ENCODE measurements at regions of chr3 and their contacts with region 1.

Region 1: DNA sequence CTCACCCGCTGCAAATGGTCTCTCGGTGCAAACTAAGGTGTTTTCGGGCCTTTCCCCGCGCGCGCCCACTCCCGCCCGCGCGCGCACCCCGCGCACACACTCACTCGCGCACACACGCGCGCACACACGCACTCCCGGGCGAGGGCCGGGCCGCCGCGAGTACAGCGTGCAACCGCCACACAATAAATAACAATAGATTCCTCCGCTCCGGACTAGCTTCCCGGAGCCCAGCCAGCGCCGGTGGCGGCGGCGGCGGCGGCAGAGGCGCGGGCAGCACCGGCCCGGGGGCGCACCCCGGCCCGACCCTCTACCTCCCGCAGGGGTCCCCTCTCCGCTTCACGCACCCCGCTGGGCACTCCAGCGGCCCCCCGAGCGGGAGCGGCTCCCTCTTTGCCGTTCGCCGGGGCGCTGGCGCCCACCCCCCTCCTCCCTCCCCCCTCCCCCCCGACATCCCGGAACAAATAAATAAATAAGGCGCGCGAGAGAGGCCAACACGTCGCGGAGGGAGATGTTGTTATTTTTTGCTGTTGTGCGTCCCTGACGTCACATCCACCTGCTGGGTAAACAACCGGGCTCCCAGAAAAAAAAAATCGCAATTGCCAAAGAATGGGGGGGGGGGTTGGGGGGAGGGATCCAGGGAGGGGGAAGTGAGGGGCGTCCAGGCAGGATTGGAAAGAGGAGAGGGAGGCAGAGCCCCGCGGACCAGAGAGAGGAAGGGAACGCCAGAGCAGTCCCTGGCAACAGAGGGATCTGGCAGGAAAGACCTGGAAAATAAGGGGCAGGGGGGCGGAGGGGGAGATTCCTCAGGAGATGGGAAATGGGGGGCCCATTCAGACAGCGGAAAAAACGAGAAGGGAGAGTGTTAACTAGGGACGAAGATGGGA is at the start of gene FOXP1:
- DNase-seq: peak; percentile 62 to 80 (median 72)
- ATAC-seq: peak; percentile 77
- H3K4me3 ChIP-seq: peak within 1 kb of the TSS; percentile 76
- H3K4me3 Mint-ChIP-seq: peak within 1 kb of the TSS; percentile 94 to 99 (median 98)
- H3K27ac ChIP-seq: peak within 1 kb of the TSS; percentile 85
- H3K27ac Mint-ChIP-seq: peak within 1 kb of the TSS; percentile 94 to 99 (median 98)
- H3K4me1 ChIP-seq: peaks cover 7 to 16% of the 10 kb centered on the region in 2 donors
- H3K4me1 Mint-ChIP-seq: peaks cover 12 to 44% (median 33%) of the 10 kb centered on the region in 7 donors
- H3K27me3 ChIP-seq: no peaks in the 10 kb centered on the region
- H3K27me3 Mint-ChIP-seq: peaks cover 0 to 38% (median 0%) of the 10 kb centered on the region in 5 donors
- total RNA-seq, gene FOXP1: 104 to 537 (median 456) TPM

Region 2: GRCh38 chr3:70308760-70309159 is 1275.0 kb before region 1 on chr3:
- CTCF ChIA-PET with region 1: no interaction called
- POLR2A ChIA-PET with region 1: no interaction called
- intact Hi-C with region 1: loop called in 1 of 2 experiments (anchors 2 kb)
- DNase-seq: no peak
- ATAC-seq: no peak
- H3K4me3 ChIP-seq: no peak overlapping the region
- H3K4me3 Mint-ChIP-seq: no peak overlapping the region
- H3K27ac ChIP-seq: no peak overlapping the region
- H3K27ac Mint-ChIP-seq: no peak overlapping the region
- H3K4me1 ChIP-seq: no peaks in the 10 kb centered on the region
- H3K4me1 Mint-ChIP-seq: peaks cover 0 to 2% (median 0%) of the 10 kb centered on the region in 7 donors
- H3K27me3 ChIP-seq: no peaks in the 10 kb centered on the region
- H3K27me3 Mint-ChIP-seq: peaks cover 0 to 35% (median 15%) of the 10 kb centered on the region in 5 donors

Region 3: DNA sequence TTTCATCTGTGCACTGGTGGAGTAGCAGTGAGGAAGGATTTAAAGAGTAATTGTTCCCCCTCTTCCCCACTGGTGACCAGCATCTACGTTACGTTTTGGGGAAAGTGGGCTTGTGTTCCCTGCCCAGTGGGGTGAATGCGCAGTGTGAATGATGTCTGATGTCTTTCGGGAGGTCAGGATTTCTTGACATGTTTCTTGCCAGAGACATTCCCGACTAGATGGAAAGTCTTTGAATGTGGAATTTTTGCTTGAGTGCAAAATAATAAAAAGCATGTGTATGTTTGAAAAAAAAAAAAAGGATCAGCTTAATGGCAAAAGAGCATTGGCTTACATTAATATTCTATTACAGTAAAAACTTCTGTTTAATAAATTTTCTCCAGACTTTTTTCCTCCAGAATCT is 632.5 kb before region 1 on chr3:
- CTCF ChIA-PET with region 1: no interaction called
- POLR2A ChIA-PET with region 1: no interaction called
- intact Hi-C with region 1: loop called in 1 of 2 experiments (anchors 5 kb)
- DNase-seq: no peak
- ATAC-seq: no peak
- H3K4me3 ChIP-seq: no peak overlapping the region
- H3K4me3 Mint-ChIP-seq: no peak overlapping the region
- H3K27ac ChIP-seq: no peak overlapping the region
- H3K27ac Mint-ChIP-seq: peak overlapping the region in 3 of 9 donors; percentile 1 to 76 (median 6)
- H3K4me1 ChIP-seq: no peaks in the 10 kb centered on the region
- H3K4me1 Mint-ChIP-seq: peaks cover 0 to 22% (median 6%) of the 10 kb centered on the region in 7 donors
- H3K27me3 ChIP-seq: no peaks in the 10 kb centered on the region
- H3K27me3 Mint-ChIP-seq: peaks cover 0 to 8% (median 0%) of the 10 kb centered on the region in 5 donors

Region 4: DNA sequence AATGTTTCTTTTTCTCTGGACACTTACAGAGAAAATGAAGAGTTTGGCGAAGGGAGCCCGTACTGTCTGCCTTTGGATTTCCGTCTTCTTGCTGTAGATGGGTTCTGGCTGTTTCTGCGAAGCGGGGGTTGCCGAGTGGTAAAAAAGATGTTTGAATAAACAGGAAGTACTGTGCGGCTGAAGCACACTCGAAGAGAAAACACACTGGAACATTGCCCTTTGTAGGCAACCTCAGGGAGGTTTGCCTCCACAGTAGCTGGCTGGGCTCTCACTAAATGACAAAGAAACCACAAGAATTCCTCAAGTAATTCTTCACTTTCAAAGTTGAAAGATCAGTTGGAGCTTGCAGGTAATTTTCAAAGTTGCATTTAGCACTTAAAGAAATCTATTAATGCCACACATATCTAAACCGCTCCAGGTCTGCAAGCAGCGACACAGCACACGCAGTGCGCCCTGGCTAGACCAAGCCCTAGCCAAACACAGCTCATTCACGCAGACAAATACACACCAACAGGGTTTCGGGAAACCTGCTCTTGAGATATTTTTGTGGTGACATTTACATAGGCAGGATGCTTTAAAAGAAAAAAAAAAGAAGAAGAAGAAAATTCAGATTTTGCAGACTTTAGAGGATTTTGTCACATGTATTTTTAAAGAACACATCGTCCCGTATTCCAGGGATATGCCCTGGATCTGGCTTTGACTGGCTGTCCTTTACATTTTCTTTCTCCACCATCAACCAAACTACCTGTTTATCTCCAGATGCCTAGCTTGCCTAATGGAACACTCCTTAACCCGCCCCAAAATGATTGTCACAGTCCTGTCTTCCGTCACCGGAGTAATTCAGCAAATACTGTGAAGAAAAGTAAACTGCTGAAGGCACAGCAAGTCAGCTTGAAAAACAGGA is 453.1 kb before region 1 on chr3:
- CTCF ChIA-PET with region 1: no interaction called
- POLR2A ChIA-PET with region 1: no interaction called
- intact Hi-C with region 1: loop called (anchors 1 kb)
- DNase-seq: peak; percentile 33 to 90 (median 85)
- ATAC-seq: peak; percentile 86
- H3K4me3 ChIP-seq: peak overlapping the region; percentile 71
- H3K4me3 Mint-ChIP-seq: peak overlapping the region; percentile 85 to 99 (median 93)
- H3K27ac ChIP-seq: peak overlapping the region; percentile 89
- H3K27ac Mint-ChIP-seq: peak overlapping the region; percentile 94 to 99 (median 97)
- H3K4me1 ChIP-seq: peaks cover 42 to 51% of the 10 kb centered on the region in 2 donors
- H3K4me1 Mint-ChIP-seq: peaks cover 49 to 85% (median 80%) of the 10 kb centered on the region in 7 donors
- H3K27me3 ChIP-seq: no peaks in the 10 kb centered on the region
- H3K27me3 Mint-ChIP-seq: no peaks in the 10 kb centered on the region

Region 5: DNA sequence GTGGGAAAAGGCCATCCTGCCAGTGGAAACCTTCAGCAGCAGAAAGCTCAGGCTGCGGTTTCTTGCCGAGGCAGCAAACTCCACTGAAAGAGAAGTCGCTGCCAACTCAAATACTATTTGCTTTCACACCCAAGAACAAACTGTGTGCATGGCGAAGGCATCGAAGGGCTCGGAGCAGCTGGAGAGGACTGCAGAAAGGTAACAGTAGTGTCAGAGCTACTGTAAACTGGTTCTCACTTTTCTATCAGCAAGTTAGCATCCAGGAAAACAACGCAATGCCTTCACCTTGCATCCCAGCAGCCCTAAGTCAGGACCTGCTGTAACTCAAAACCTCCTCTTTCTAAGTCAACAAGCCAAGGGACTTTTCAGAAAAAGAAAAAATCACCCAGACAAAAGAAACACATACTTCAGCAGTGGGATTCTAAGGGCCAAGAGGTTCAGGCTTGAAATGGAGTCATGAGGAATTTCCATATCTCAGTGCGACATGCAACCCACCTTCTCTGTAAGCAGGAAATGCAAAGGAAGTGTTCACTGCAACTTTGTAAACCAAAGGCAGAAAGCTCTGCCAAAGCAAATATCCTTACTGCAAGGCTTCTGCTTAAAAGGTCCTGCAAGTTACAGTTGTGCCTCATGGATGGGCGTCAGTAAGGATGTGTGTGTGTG is 193.8 kb before region 1 on chr3:
- CTCF ChIA-PET with region 1: no interaction called
- POLR2A ChIA-PET with region 1: interaction called, 5 read pairs
- intact Hi-C with region 1: loop called (anchors 5 to 10 kb)
- DNase-seq: peak in 8 of 9 donors; percentile 25 to 67 (median 49)
- ATAC-seq: peak; percentile 55
- H3K4me3 ChIP-seq: peak overlapping the region; percentile 51
- H3K4me3 Mint-ChIP-seq: peak overlapping the region; percentile 68 to 88 (median 83)
- H3K27ac ChIP-seq: peak overlapping the region; percentile 81
- H3K27ac Mint-ChIP-seq: peak overlapping the region; percentile 75 to 99 (median 90)
- H3K4me1 ChIP-seq: peaks cover 29 to 74% of the 10 kb centered on the region in 2 donors
- H3K4me1 Mint-ChIP-seq: peaks cover 27 to 93% (median 83%) of the 10 kb centered on the region in 7 donors
- H3K27me3 ChIP-seq: no peaks in the 10 kb centered on the region
- H3K27me3 Mint-ChIP-seq: peaks cover 0 to 22% (median 0%) of the 10 kb centered on the region in 5 donors

Region 6: DNA sequence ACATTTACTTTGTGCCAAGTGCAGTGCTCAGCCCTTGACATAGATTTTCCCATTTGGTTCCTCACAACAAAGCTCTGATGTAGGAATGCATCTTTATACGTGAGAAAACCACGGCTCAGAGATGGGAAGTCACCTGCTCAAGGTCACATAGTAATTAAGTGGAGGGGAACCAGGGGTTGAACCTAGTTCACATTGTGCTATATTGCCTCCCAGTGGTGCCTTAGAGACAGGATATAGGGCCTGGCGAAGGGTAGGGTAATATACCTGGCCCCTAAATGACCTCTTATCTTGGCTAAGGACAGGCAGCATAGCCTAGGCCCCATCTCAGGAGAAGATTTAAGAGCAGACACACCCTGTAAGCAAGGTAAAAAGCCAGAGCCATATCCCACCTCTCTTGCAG is 71.8 kb before region 1 on chr3:
- CTCF ChIA-PET with region 1: no interaction called
- POLR2A ChIA-PET with region 1: no interaction called
- intact Hi-C with region 1: loop called (anchors 1 to 5 kb)
- DNase-seq: peak in 7 of 9 donors; percentile 60 to 76 (median 66)
- ATAC-seq: peak; percentile 96
- H3K4me3 ChIP-seq: no peak overlapping the region
- H3K4me3 Mint-ChIP-seq: peak overlapping the region in 7 of 10 donors; percentile 6 to 56 (median 44)
- H3K27ac ChIP-seq: peak overlapping the region; percentile 36
- H3K27ac Mint-ChIP-seq: peak overlapping the region in 5 of 9 donors; percentile 69 to 91 (median 83)
- H3K4me1 ChIP-seq: peaks cover 5 to 22% of the 10 kb centered on the region in 2 donors
- H3K4me1 Mint-ChIP-seq: peaks cover 11 to 54% (median 24%) of the 10 kb centered on the region in 7 donors
- H3K27me3 ChIP-seq: no peaks in the 10 kb centered on the region
- H3K27me3 Mint-ChIP-seq: no peaks in the 10 kb centered on the region

Region 7: GRCh38 chr3:71681224-71681668 is 97.4 kb after region 1 on chr3:
- CTCF ChIA-PET with region 1: no interaction called
- POLR2A ChIA-PET with region 1: no interaction called
- intact Hi-C with region 1: no loop called
- DNase-seq: peak in 6 of 9 donors; percentile 12 to 54 (median 18)
- ATAC-seq: peak; percentile 60
- H3K4me3 ChIP-seq: no peak overlapping the region
- H3K4me3 Mint-ChIP-seq: no peak overlapping the region
- H3K27ac ChIP-seq: no peak overlapping the region
- H3K27ac Mint-ChIP-seq: peak overlapping the region in 4 of 9 donors; percentile 48 to 86 (median 60)
- H3K4me1 ChIP-seq: no peaks in the 10 kb centered on the region
- H3K4me1 Mint-ChIP-seq: peaks cover 0 to 22% (median 10%) of the 10 kb centered on the region in 7 donors
- H3K27me3 ChIP-seq: no peaks in the 10 kb centered on the region
- H3K27me3 Mint-ChIP-seq: no peaks in the 10 kb centered on the region

Region 8: DNA sequence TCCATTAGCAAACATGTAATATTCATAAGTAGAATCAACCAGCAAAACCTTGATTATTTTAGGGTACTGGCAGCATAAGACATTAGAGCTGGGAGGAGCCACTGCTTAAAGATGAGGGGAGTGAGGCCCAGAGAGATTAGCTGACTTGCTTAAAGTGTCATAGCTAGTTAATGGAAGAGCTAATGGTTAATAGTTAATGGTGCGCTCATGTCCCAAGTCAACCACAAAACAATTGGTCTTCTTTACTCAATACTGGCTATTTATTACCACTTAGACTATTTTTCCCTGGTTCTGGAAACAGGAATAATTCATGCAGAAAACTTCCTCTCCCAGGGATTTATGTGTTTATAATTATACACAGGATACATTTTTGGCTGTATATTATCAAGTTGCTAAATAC is 108.3 kb after region 1 on chr3:
- CTCF ChIA-PET with region 1: no interaction called
- POLR2A ChIA-PET with region 1: no interaction called
- intact Hi-C with region 1: no loop called
- DNase-seq: no peak
- ATAC-seq: no peak
- H3K4me3 ChIP-seq: no peak overlapping the region
- H3K4me3 Mint-ChIP-seq: no peak overlapping the region
- H3K27ac ChIP-seq: no peak overlapping the region
- H3K27ac Mint-ChIP-seq: peak overlapping the region in 1 of 9 donors; percentile 12
- H3K4me1 ChIP-seq: no peaks in the 10 kb centered on the region
- H3K4me1 Mint-ChIP-seq: peaks cover 0 to 11% (median 4%) of the 10 kb centered on the region in 7 donors
- H3K27me3 ChIP-seq: no peaks in the 10 kb centered on the region
- H3K27me3 Mint-ChIP-seq: no peaks in the 10 kb centered on the region

Region 9: DNA sequence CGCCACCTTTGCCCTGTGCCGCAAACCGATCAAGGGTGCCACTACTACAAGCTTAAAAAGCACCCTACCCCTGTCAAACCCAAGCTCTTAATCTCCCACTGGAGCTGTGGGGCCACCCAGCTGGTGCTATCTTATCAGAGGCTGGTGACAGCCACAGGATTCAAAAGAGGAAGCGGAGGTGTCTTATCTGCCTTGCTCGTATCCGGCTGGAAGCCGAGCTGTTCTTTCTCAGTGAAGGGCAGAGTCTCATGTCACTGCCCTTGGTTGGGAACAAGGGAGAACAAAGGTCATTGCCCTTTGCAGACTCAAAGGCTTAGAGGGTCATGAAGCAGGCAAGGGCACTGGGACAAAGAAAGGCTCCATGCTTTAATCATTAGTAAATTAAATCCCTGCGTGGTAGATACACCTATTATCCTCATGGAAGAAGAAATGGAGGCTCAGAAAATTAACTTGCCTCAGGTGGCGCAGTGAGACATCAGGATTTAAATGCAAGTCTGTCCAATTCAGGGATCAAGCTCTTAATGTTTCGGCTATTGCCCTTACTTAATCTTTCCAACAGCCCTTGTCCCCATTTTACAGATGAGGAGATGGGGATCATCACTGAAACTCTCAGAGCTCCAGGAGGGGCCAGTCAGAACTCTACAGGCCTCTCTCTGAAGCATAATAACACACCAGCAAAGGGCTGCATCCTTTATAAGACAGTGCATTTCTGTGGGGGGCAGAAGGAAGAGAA is 561.1 kb after region 1 on chr3:
- CTCF ChIA-PET with region 1: no interaction called
- POLR2A ChIA-PET with region 1: no interaction called
- intact Hi-C with region 1: no loop called
- DNase-seq: peak in 1 of 9 donors; percentile 11
- ATAC-seq: peak; percentile 68
- H3K4me3 ChIP-seq: no peak overlapping the region
- H3K4me3 Mint-ChIP-seq: peak overlapping the region in 4 of 10 donors; percentile 17 to 23 (median 20)
- H3K27ac ChIP-seq: no peak overlapping the region
- H3K27ac Mint-ChIP-seq: peak overlapping the region in 2 of 9 donors; percentile 4 to 73
- H3K4me1 ChIP-seq: peaks cover 0 to 6% of the 10 kb centered on the region in 2 donors
- H3K4me1 Mint-ChIP-seq: peaks cover 5 to 28% (median 8%) of the 10 kb centered on the region in 7 donors
- H3K27me3 ChIP-seq: no peaks in the 10 kb centered on the region
- H3K27me3 Mint-ChIP-seq: peaks cover 0 to 9% (median 0%) of the 10 kb centered on the region in 5 donors

Region 10: DNA sequence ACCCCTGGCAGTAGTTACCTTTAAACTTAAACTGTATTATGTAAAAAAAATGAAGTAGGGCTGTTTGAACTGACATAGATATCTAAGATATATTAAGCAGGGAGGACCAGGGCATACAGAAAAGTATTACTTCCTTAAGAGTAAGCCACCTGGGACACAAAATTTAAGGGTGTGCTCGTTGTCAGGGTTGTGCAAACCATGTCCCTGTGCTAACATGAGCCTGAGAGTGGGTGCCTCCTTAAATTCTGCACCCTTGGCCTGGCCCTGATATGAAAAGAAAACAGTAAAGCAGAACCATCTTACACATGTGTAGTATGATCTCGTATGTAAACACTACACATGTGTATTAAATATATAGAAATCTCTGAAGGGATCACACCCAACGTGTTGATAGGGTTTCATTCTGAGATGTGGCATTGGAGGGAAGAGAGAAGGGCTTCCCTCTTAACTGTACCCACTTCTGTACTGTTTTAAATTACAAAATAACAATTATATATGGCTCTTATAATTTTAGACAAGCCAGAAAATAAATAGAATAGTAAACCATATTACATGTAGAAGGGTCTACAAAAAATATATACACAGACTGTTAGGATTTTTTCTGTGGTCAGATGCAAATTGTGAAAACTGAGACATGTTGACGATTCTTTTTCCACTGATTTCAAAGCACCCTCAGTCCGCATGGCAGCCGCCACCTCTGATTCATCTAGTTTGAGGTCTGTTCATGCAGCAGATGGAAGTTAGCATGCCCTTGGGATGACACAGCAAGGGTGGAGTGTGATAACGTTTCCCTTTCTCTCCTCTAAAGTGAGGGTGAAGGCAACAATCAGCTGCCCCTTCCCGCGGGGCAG is 602.0 kb after region 1 on chr3:
- CTCF ChIA-PET with region 1: no interaction called
- POLR2A ChIA-PET with region 1: no interaction called
- intact Hi-C with region 1: no loop called
- DNase-seq: peak in 1 of 9 donors; percentile 27
- ATAC-seq: peak; percentile 63
- H3K4me3 ChIP-seq: no peak overlapping the region
- H3K4me3 Mint-ChIP-seq: no peak overlapping the region
- H3K27ac ChIP-seq: no peak overlapping the region
- H3K27ac Mint-ChIP-seq: no peak overlapping the region
- H3K4me1 ChIP-seq: no peaks in the 10 kb centered on the region
- H3K4me1 Mint-ChIP-seq: peaks cover 0 to 23% (median 15%) of the 10 kb centered on the region in 7 donors
- H3K27me3 ChIP-seq: no peaks in the 10 kb centered on the region
- H3K27me3 Mint-ChIP-seq: peaks cover 0 to 7% (median 3%) of the 10 kb centered on the region in 5 donors

Measured in naive thymus-derived CD4-positive, alpha-beta T cell (primary cell).